Aorta (tissue), 5 donors: ENCODE measurements at regions of chr1 and their contacts with region 1.

Region 1: DNA sequence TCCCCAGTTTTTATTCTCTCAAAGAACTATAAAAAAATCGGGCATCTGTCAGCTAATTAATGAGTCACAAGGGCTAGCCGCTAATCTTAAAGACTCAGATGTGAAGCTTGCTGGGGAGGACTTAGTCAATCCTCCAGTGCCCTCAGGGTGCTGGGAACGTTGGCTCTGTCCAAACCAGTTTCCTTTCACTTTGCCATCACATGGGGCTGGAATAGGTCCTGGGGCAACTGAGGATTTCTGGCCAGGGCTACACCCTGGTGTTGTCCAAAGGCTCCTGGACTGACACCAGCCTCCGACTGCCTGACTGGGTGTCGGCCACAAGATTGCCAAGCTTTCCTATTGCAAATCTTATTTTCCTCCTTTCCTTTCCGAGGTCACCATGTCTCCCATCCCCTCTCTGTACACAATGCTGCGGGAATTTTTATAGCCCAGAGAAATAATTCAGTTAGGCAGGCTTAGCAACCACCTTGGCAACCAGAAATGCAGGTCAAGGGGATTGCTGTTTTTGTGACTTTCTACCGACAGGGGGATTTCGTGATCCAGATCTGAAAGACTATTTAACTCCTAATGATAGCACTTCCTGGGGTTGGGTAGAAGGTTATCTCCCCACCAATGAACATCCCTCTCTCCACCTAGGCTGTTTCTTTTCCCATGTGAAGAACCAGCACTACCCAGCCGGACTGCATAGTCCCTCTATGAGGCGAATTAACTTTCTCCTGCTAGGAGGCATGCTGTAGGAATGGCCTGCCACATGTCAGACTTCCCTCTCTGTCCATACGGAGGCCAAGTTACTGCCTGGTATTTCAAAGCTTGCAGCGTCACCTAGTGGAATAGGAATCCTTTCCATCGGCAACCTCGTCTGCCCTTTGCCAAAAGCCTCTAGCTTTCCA is 29.9 kb upstream of the CTBS start:
- DNase-seq: peak in 1 of 2 donors; percentile 70
- ATAC-seq: peak; percentile 88
- H3K4me3 ChIP-seq: peak overlapping the region; percentile 6 to 60
- H3K27ac ChIP-seq: peak overlapping the region; percentile 63 to 92
- H3K4me1 ChIP-seq: peaks cover 3 to 5% of the 10 kb centered on the region in 2 donors
- H3K27me3 ChIP-seq: no peaks in the 10 kb centered on the region

Region 2: GRCh38 chr1:84442256-84442655 is 161.9 kb before region 1 on chr1:
- intact Hi-C with region 1: loop called (anchors 1 to 2 kb)
- DNase-seq: no peak
- ATAC-seq: peak; percentile 81
- H3K4me3 ChIP-seq: no peak overlapping the region
- H3K27ac ChIP-seq: no peak overlapping the region
- H3K4me1 ChIP-seq: no peaks in the 10 kb centered on the region
- H3K27me3 ChIP-seq: no peaks in the 10 kb centered on the region

Region 3: GRCh38 chr1:84478876-84479868 is 125.0 kb before region 1 on chr1 and contains the start of gene RPF1:
- intact Hi-C with region 1: loop called in 1 of 2 experiments (anchors 10 kb)
- DNase-seq: peak; percentile 74 to 91
- ATAC-seq: peak; percentile 95
- H3K4me3 ChIP-seq: peak within 1 kb of the TSS; percentile 67 to 90
- H3K27ac ChIP-seq: peak within 1 kb of the TSS; percentile 61 to 68
- H3K4me1 ChIP-seq: peaks cover 0 to 2% of the 10 kb centered on the region in 2 donors
- H3K27me3 ChIP-seq: no peaks in the 10 kb centered on the region
- total RNA-seq, gene RPF1: 18.6 to 25.1 TPM

Region 4: DNA sequence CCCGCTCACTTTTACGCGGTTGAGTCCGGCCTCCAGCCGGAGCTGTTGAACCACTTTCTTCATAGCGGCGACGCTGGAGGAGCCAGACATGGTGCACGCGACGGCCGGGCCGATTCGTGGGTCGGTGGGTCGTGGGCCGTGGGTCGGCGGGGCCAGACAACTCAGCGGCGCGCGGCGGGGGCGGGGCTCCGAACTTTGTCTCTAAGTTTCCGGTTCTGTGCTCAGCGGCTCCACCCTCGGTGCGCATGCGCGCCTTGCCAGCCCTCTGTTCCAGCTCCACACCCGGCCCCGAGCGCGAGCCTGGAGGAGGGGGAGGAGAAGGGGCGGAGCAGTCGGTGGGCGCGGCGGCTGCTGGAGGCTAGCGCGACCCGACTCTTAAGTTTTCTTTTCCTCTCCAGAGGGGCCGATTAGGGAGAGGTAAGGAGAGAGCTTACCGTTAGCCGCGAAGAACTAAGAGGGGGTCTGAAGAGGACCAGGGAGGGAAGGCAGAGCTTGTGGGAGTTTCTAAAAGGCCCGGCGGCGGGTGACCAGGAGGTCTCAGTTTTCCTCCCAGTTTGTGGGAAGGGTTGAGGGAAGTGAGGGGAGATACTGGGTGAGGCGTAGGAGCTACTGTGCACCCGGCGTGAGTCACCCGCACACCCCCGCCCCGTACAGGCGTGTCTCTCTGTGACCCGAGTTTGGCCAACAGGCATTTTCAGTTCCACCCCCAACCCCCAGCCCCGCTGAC is 98.0 kb before region 1 on chr1 and contains the starts of genes GNG5 and SPATA1:
- intact Hi-C with region 1: loop called (anchors 5 kb)
- DNase-seq: peak; percentile 99 to 100
- ATAC-seq: peak; percentile 99
- H3K4me3 ChIP-seq: peak within 1 kb of the TSS; percentile 48 to 69
- H3K27ac ChIP-seq: peak within 1 kb of the TSS; percentile 5 to 85
- H3K4me1 ChIP-seq: peaks cover 1 to 10% of the 10 kb centered on the region in 2 donors
- H3K27me3 ChIP-seq: no peaks in the 10 kb centered on the region
- total RNA-seq, gene GNG5: 56.7 to 64.6 TPM
- total RNA-seq, gene SPATA1: 1.9 to 2.7 TPM